ENCODE measurements at regions of chr10 and their contacts with region 1.

Region 1: GRCh38 chr10:119207367-119207668 is at the start of gene GRK5:
- DNase-seq: peak; percentile 95 to 96 (median 95)
- H3K4me3 ChIP-seq: peak within 1 kb of the TSS; percentile 96
- H3K27ac ChIP-seq: peak within 1 kb of the TSS; percentile 92 to 98
- H3K4me1 ChIP-seq: peaks cover 6% of the 10 kb centered on the region
- H3K27me3 ChIP-seq: no peaks in the 10 kb centered on the region
- CTCF ChIP-seq: no peak
- EP300 ChIP-seq: no peak
- POLR2A ChIP-seq: peak; percentile 50
- total RNA-seq, gene GRK5: 10.0 to 115 (median 36.9) TPM

Region 2: DNA sequence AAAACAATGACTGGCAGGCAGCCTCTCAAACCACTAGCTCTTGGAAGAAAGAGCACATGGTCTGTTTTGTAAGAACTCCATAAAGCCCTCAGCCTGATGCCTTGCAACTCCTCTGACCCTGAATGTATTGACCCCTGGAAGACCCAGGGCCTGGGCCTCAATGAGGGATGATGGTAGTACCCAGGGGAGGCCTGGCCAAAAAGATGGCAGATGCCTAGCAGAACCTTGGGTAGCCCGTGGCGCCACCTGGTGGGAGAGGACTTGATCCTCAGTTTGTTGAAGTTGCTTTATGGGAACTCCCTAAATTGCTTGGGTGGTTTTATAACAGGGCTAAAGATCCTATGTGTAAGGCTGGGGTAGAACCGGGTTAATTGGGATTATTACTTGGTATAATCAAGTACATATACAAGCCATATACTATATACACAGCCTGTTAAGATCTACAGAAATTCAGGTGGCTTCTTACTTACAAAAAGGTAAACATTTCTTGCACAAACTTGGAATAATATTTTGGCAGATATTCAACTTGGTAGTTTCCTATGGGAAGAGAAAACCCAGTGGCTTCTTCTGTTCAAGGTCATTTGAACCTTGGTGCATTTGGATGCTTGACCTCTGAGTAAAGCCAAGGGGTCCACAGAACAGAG is 356.8 kb before region 1 on chr10:
- intact Hi-C with region 1: no loop called
- DNase-seq: peak in 4 of 5 donors; percentile 28 to 68 (median 37)
- H3K4me3 ChIP-seq: no peak overlapping the region
- H3K27ac ChIP-seq: no peak overlapping the region
- H3K4me1 ChIP-seq: no peaks in the 10 kb centered on the region
- H3K27me3 ChIP-seq: no peaks in the 10 kb centered on the region
- CTCF ChIP-seq: no peak
- EP300 ChIP-seq: no peak
- POLR2A ChIP-seq: no peak

Region 3: DNA sequence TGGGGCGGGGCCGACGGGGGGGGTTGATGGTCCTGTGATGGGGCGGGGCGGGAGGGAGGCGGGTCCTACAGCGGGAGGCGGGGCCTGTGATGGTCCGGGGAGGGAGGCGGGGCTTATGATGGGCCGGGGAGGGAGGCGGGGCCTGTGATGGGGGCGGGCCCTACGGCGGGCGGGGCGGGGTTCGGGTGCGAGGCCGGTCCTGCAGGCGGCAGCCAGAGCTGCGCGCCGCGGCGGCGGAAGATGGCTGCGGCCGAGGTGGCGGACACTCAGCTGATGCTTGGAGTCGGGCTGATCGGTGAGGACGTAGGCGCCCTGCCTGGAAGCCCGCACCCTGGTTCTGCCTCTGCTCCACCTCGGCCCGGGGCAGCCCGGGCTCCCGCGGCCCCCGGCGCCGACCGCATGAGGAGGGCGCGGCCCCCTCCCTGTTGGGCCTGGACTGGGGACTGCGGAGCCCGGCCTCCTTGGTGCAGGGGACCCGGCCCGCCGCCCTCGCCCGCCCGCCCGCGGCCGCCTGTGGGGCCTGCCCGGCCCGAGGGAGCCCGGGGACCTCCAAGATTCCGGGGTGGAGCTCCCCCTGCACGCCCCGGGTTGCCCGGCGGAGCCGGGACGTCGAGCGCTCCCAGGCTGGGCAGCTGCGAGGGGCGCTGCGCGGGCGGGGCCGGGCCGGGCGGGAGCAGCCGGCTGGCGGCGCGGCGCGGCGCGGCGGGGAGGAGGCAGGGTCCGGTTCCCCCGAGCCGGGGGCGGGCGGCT is 103.2 kb before region 1 on chr10 and contains the start of gene DENND10:
- intact Hi-C with region 1: no loop called
- DNase-seq: peak; percentile 82 to 91 (median 86)
- H3K4me3 ChIP-seq: peak within 1 kb of the TSS; percentile 62
- H3K27ac ChIP-seq: peak within 1 kb of the TSS in 1 of 2 donors; percentile 45
- H3K4me1 ChIP-seq: peaks cover 7% of the 10 kb centered on the region
- H3K27me3 ChIP-seq: no peaks in the 10 kb centered on the region
- CTCF ChIP-seq: peak in 1 of 3 donors; percentile 29
- EP300 ChIP-seq: no peak
- POLR2A ChIP-seq: peak; percentile 73
- total RNA-seq, gene DENND10: 32.3 to 53.8 (median 41.3) TPM

Region 4: GRCh38 chr10:119253433-119254174 is 46.3 kb after region 1 on chr10:
- intact Hi-C with region 1: loop called in 2 of 4 experiments (anchors 2 to 5 kb)
- DNase-seq: peak; percentile 87 to 91 (median 89)
- H3K4me3 ChIP-seq: no peak overlapping the region
- H3K27ac ChIP-seq: peak overlapping the region; percentile 86 to 91
- H3K4me1 ChIP-seq: peaks cover 51% of the 10 kb centered on the region
- H3K27me3 ChIP-seq: no peaks in the 10 kb centered on the region
- CTCF ChIP-seq: peak in 1 of 3 donors; percentile 19
- EP300 ChIP-seq: peak; percentile 13
- POLR2A ChIP-seq: no peak

Region 5: GRCh38 chr10:119270762-119271366 is 63.5 kb after region 1 on chr10:
- intact Hi-C with region 1: loop called in 1 of 4 experiments (anchors 2 kb)
- DNase-seq: peak; percentile 65 to 82 (median 73)
- H3K4me3 ChIP-seq: no peak overlapping the region
- H3K27ac ChIP-seq: peak overlapping the region; percentile 16 to 72
- H3K4me1 ChIP-seq: peaks cover 21% of the 10 kb centered on the region
- H3K27me3 ChIP-seq: no peaks in the 10 kb centered on the region
- CTCF ChIP-seq: no peak
- EP300 ChIP-seq: no peak
- POLR2A ChIP-seq: no peak

Region 6: GRCh38 chr10:119281581-119282071 is 74.3 kb after region 1 on chr10:
- intact Hi-C with region 1: loop called in 2 of 4 experiments (anchors 2 to 10 kb)
- DNase-seq: peak; percentile 52 to 83 (median 78)
- H3K4me3 ChIP-seq: no peak overlapping the region
- H3K27ac ChIP-seq: no peak overlapping the region
- H3K4me1 ChIP-seq: peaks cover 40% of the 10 kb centered on the region
- H3K27me3 ChIP-seq: no peaks in the 10 kb centered on the region
- CTCF ChIP-seq: no peak
- EP300 ChIP-seq: no peak
- POLR2A ChIP-seq: no peak

Region 7: GRCh38 chr10:119368991-119369869 is 161.9 kb after region 1 on chr10:
- intact Hi-C with region 1: loop called in 2 of 4 experiments (anchors 10 kb)
- DNase-seq: peak in 2 of 5 donors; percentile 43 to 63
- H3K4me3 ChIP-seq: no peak overlapping the region
- H3K27ac ChIP-seq: peak overlapping the region in 1 of 2 donors; percentile 76
- H3K4me1 ChIP-seq: peaks cover 37% of the 10 kb centered on the region
- H3K27me3 ChIP-seq: no peaks in the 10 kb centered on the region
- CTCF ChIP-seq: no peak
- EP300 ChIP-seq: no peak
- POLR2A ChIP-seq: no peak

Region 8: GRCh38 chr10:119416855-119417254 is 209.5 kb after region 1 on chr10:
- intact Hi-C with region 1: loop called (anchors 2 to 10 kb)
- DNase-seq: peak; percentile 45 to 78 (median 76)
- H3K4me3 ChIP-seq: no peak overlapping the region
- H3K27ac ChIP-seq: no peak overlapping the region
- H3K4me1 ChIP-seq: peaks cover 38% of the 10 kb centered on the region
- H3K27me3 ChIP-seq: no peaks in the 10 kb centered on the region
- CTCF ChIP-seq: peak; percentile 29 to 72 (median 45)
- EP300 ChIP-seq: no peak
- POLR2A ChIP-seq: no peak

Region 9: GRCh38 chr10:119445311-119445934 is 238.1 kb after region 1 on chr10:
- intact Hi-C with region 1: loop called (anchors 2 kb)
- DNase-seq: peak; percentile 78 to 91 (median 90)
- H3K4me3 ChIP-seq: no peak overlapping the region
- H3K27ac ChIP-seq: no peak overlapping the region
- H3K4me1 ChIP-seq: peaks cover 22% of the 10 kb centered on the region
- H3K27me3 ChIP-seq: no peaks in the 10 kb centered on the region
- CTCF ChIP-seq: peak; percentile 91 to 93 (median 92)
- EP300 ChIP-seq: no peak
- POLR2A ChIP-seq: no peak

Region 10: DNA sequence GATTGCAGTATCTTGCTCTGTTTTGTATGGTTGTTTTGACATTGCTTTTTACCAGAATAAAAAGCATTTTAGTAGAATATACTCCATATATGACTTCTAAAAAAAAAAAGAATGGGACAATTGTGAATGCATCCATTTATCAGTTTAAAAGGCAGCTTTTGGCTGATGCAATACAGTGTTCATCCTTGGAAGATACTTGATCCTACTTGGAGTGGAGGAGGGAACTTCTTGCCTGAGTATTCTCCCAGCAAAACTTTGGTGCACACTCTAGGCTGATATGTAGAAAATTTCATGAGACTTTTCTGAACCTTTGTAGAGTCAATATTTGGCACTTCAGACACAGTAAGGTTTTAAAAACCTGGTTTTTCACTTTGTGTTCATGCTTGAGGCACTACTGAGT is 1684.0 kb after region 1 on chr10:
- intact Hi-C with region 1: no loop called
- DNase-seq: no peak
- H3K4me3 ChIP-seq: no peak overlapping the region
- H3K27ac ChIP-seq: no peak overlapping the region
- H3K4me1 ChIP-seq: no peaks in the 10 kb centered on the region
- H3K27me3 ChIP-seq: no peaks in the 10 kb centered on the region
- CTCF ChIP-seq: no peak
- EP300 ChIP-seq: no peak
- POLR2A ChIP-seq: no peak